Activated B cell treated with CpG ODN at 0.5 μM for 24 hours (primary cell): ENCODE measurements at regions of chr3 and their contacts with region 1.

Region 1: GRCh38 chr3:19348929-19349564 is 200.7 kb downstream of the KCNH8 start:
- DNase-seq: no peak
- ATAC-seq: peak; percentile 77
- H3K4me3 Mint-ChIP-seq: peak overlapping the region; percentile 62
- H3K27ac Mint-ChIP-seq: peak overlapping the region; percentile 89
- H3K4me1 Mint-ChIP-seq: peaks cover 52% of the 10 kb centered on the region
- H3K27me3 Mint-ChIP-seq: no peaks in the 10 kb centered on the region
- CTCF ChIP-seq: no peak

Region 2: DNA sequence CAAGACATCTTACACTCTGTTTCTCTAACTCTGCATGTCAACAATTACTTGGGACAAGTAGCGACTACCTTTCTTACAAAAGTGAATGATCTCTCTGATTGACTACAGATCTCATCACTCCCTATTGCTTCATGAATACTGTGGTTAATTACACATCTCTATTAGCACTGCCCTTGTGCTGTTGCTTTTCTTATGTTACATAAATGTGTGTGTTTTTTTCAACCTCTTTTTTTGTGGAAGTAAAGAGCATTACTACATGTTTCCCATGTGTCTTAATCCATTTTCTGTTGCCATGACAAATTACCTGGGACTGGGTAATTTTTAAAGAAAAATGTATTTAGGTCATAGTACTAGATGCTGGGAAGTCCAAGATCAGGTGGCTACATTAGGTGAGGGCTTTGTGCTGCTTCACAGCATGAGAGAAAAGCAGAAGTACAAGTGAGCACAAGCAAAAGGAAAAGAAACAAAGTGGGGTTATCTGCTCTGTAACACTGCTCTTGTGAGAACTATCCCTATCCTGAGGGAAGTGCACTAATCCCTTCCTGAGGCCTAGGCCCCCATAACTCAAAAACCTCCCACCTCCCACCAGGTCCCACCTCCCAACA is 625.7 kb before region 1 on chr3:
- CTCF ChIA-PET with region 1: no interaction called
- POLR2A ChIA-PET with region 1: no interaction called
- intact Hi-C with region 1: no loop called
- DNase-seq: no peak
- ATAC-seq: peak; percentile 45
- H3K4me3 Mint-ChIP-seq: no peak overlapping the region
- H3K27ac Mint-ChIP-seq: no peak overlapping the region
- H3K4me1 Mint-ChIP-seq: peaks cover 44% of the 10 kb centered on the region
- H3K27me3 Mint-ChIP-seq: no peaks in the 10 kb centered on the region
- CTCF ChIP-seq: no peak

Region 3: DNA sequence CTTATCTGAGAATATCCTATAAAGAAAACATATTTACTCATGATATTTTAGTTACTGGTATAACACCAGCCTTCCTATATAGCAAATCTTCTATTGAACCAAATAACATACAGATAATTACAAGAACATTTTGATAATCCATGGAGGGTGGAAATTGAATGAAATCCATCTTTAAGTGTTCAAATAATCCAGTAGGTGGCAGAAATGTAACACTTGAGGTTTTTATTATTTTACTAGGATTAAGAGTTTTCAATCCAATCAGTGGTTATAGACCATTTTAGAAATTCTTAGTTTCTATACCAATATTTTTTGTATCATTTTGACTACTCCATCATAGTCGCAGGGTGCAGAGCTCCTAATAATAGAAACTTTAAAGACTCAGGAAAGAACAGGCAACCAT is 302.6 kb before region 1 on chr3:
- CTCF ChIA-PET with region 1: interaction called, 4 read pairs
- POLR2A ChIA-PET with region 1: no interaction called
- intact Hi-C with region 1: loop called (anchors 2 kb)
- DNase-seq: no peak
- ATAC-seq: no peak
- H3K4me3 Mint-ChIP-seq: no peak overlapping the region
- H3K27ac Mint-ChIP-seq: no peak overlapping the region
- H3K4me1 Mint-ChIP-seq: no peaks in the 10 kb centered on the region
- H3K27me3 Mint-ChIP-seq: no peaks in the 10 kb centered on the region
- CTCF ChIP-seq: no peak

Region 4: DNA sequence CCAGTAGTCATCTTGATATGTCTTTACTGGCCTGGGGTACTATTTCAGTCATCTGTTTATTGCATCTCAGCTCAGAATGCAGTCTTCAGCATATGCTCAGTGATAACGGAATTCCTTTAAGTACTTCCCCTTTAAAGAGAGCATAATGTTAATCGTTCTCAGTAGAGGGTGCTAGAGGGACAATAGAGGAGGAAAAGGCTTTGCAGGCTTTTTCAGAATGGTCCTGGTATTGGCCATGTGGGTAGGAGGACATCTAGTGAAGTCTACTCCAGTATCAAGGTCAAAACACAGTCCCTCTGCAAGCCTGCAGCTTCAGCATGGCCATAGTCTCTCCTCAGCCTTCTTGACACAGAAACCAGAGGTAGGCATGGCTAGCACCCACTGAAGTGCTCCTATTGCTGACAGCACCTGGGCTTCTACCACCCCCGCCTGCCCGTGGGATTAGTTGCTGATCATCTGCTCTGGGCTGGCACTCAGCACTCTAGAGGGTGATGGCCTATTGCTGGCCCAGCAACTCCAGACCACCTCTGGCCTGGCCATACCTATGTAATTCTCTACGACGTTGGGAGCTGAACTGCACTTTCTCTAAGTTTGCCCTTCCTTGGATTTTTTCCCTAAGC is 135.3 kb before region 1 on chr3:
- CTCF ChIA-PET with region 1: interaction called, 39 read pairs
- POLR2A ChIA-PET with region 1: no interaction called
- intact Hi-C with region 1: loop called (anchors 1 kb)
- DNase-seq: no peak
- ATAC-seq: peak; percentile 74
- H3K4me3 Mint-ChIP-seq: no peak overlapping the region
- H3K27ac Mint-ChIP-seq: no peak overlapping the region
- H3K4me1 Mint-ChIP-seq: peaks cover 4% of the 10 kb centered on the region
- H3K27me3 Mint-ChIP-seq: no peaks in the 10 kb centered on the region
- CTCF ChIP-seq: no peak

Region 5: DNA sequence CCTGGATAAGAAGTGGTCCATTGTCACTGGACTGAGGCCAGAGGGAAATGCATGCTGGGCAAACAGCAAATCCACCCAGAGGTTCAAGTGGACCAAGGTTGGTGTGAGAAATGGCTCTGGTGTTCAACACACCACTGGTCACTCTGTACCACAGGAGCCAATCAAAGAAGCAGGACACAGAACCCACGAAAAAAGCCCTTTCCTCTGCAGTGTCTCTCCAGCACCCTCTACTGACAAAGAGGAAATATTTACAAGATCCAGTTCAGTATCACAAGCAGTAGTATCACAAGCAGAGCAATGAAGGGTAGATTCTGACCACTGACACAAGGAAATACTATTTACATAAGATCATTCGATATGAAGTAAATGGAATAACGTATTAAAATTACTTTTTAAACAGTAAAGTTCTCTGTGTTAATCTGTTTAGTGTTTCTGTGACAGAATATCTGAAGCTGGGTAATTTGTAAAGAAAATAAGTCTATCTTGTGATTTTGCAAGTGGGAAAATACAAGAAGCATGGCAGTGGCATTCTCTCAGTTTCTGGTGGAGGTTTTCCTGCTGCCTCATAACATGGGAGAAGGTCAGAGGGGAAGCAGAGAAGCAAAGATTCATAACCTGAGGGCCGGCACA is 194.3 kb after region 1 on chr3:
- CTCF ChIA-PET with region 1: interaction called, 64 read pairs
- POLR2A ChIA-PET with region 1: interaction called, 9 read pairs
- intact Hi-C with region 1: loop called (anchors 1 kb)
- DNase-seq: peak; percentile 21
- ATAC-seq: peak; percentile 57
- H3K4me3 Mint-ChIP-seq: peak overlapping the region; percentile 21
- H3K27ac Mint-ChIP-seq: peak overlapping the region; percentile 95
- H3K4me1 Mint-ChIP-seq: peaks cover 69% of the 10 kb centered on the region
- H3K27me3 Mint-ChIP-seq: no peaks in the 10 kb centered on the region
- CTCF ChIP-seq: peak; percentile 27

Region 6: GRCh38 chr3:19946832-19947548 is 597.9 kb after region 1 on chr3 and contains the start of gene RAB5A:
- CTCF ChIA-PET with region 1: no interaction called
- POLR2A ChIA-PET with region 1: no interaction called
- intact Hi-C with region 1: loop called (anchors 2 kb)
- DNase-seq: peak; percentile 95
- ATAC-seq: peak; percentile 87
- H3K4me3 Mint-ChIP-seq: peak within 1 kb of the TSS; percentile 94
- H3K27ac Mint-ChIP-seq: peak within 1 kb of the TSS; percentile 96
- H3K4me1 Mint-ChIP-seq: peaks cover 47% of the 10 kb centered on the region
- H3K27me3 Mint-ChIP-seq: no peaks in the 10 kb centered on the region
- CTCF ChIP-seq: no peak
- total RNA-seq, gene RAB5A: 43.2 and 45.2 TPM in 2 replicates

Region 7: GRCh38 chr3:20185701-20186598 is 836.9 kb after region 1 on chr3 and contains the start of gene SGO1:
- CTCF ChIA-PET with region 1: no interaction called
- POLR2A ChIA-PET with region 1: no interaction called
- intact Hi-C with region 1: loop called (anchors 5 kb)
- DNase-seq: peak; percentile 100
- ATAC-seq: peak; percentile 93
- H3K4me3 Mint-ChIP-seq: no peak within 1 kb of the TSS
- H3K27ac Mint-ChIP-seq: no peak within 1 kb of the TSS
- H3K4me1 Mint-ChIP-seq: no peaks in the 10 kb centered on the region
- H3K27me3 Mint-ChIP-seq: no peaks in the 10 kb centered on the region
- CTCF ChIP-seq: no peak
- total RNA-seq, gene SGO1: 5.9 and 7.2 TPM in 2 replicates